ENCODE measurements at regions of chr18 and their contacts with region 1.

Region 1: DNA sequence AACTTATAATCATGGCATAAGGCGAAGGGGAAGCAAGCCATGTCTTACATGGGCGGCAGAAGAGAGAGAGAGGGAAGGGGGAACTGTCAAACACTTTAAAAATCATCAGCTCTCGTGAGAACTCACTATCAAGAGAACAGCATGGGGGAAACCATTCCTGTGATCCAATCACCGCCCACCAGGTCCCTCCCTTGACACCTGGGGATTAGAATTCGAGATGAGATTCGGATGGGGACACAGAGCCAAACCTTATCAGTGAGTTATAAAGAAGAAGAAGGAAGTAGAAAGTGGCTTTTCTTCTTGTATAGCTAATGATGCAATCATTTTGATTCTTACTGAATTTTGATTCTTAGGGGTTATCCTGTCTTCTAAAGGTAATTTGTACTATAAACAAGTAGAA is 51.4 kb downstream of the SMCHD1 start:
- DNase-seq: no peak
- ATAC-seq: no peak
- H3K4me3 ChIP-seq: no peak overlapping the region
- H3K4me3 Mint-ChIP-seq: no peak overlapping the region
- H3K27ac ChIP-seq: peak overlapping the region in 1 of 2 donors; percentile 58
- H3K27ac Mint-ChIP-seq: peak overlapping the region; percentile 82
- H3K4me1 ChIP-seq: peaks cover 0 to 3% of the 10 kb centered on the region in 2 donors
- H3K4me1 Mint-ChIP-seq: peaks cover 8% of the 10 kb centered on the region
- H3K27me3 ChIP-seq: no peaks in the 10 kb centered on the region
- H3K27me3 Mint-ChIP-seq: no peaks in the 10 kb centered on the region
- CTCF ChIP-seq: no peak

Region 2: DNA sequence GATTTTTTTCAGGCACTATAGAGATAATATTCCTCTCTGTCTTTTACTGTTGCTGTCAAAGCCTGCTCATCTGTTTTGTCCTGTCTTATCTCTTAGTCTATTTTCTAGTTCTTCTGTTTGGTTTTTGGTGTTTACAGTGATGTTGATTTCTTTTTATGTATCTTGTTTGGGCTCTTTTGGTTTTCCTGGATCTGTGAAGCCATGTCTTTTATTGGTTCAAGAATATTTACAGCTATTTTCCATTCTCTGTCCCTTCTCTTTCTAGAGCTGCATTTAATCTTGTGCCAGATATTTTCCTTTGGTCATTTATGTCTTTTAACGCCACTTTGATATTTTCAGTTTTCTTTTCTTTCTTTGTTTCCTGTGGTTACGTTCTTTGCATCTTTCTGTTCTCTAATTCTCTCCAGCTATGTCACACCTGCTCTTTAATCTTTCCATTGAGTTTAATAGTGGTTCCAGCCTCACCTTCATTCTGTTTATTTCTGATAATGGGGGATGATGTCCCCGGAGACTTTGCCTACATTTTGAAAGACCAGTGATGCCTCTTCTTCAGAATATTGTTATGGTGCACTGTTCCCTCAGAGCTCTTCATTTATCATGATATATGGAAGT is 19.4 kb before region 1 on chr18:
- CTCF ChIA-PET with region 1: no interaction called
- POLR2A ChIA-PET with region 1: no interaction called
- intact Hi-C with region 1: loop called (anchors 2 kb)
- DNase-seq: peak; percentile 36
- ATAC-seq: peak; percentile 61
- H3K4me3 ChIP-seq: peak overlapping the region in 1 of 5 experiments; percentile 27
- H3K4me3 Mint-ChIP-seq: peak overlapping the region; percentile 57
- H3K27ac ChIP-seq: peak overlapping the region; percentile 57 to 86
- H3K27ac Mint-ChIP-seq: peak overlapping the region; percentile 79
- H3K4me1 ChIP-seq: peaks cover 16 to 18% of the 10 kb centered on the region in 2 donors
- H3K4me1 Mint-ChIP-seq: peaks cover 38% of the 10 kb centered on the region
- H3K27me3 ChIP-seq: no peaks in the 10 kb centered on the region
- H3K27me3 Mint-ChIP-seq: no peaks in the 10 kb centered on the region
- CTCF ChIP-seq: no peak

Region 3: DNA sequence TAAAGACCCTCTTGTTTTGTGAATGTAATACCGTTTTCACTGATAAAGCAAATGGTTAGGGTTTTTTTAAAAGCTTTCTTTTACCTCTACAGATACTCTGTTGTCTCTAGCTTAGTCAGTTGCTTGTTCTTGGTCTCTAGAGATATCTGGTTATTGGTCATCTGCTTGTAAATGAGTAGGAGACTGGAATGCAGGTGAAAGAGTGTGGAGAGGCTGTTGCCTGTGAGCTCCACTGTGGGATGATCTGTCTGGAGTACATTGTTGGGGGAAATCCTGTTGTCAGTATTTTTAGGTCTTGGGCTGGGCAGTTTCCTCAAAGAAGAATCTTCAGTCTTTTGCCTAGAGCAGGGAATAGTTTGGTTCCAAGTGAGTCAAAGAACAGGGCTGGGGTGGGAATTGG is 16.3 kb after region 1 on chr18:
- CTCF ChIA-PET with region 1: no interaction called
- POLR2A ChIA-PET with region 1: no interaction called
- intact Hi-C with region 1: loop called (anchors 2 kb)
- DNase-seq: no peak
- ATAC-seq: no peak
- H3K4me3 ChIP-seq: no peak overlapping the region
- H3K4me3 Mint-ChIP-seq: no peak overlapping the region
- H3K27ac ChIP-seq: peak overlapping the region in 1 of 2 donors; percentile 32
- H3K27ac Mint-ChIP-seq: no peak overlapping the region
- H3K4me1 ChIP-seq: no peaks in the 10 kb centered on the region
- H3K4me1 Mint-ChIP-seq: no peaks in the 10 kb centered on the region
- H3K27me3 ChIP-seq: no peaks in the 10 kb centered on the region
- H3K27me3 Mint-ChIP-seq: no peaks in the 10 kb centered on the region
- CTCF ChIP-seq: no peak

Region 4: GRCh38 chr18:4639628-4640310 is 1932.9 kb after region 1 on chr18:
- CTCF ChIA-PET with region 1: no interaction called
- POLR2A ChIA-PET with region 1: no interaction called
- intact Hi-C with region 1: no loop called
- DNase-seq: no peak
- ATAC-seq: no peak
- H3K4me3 ChIP-seq: no peak overlapping the region
- H3K4me3 Mint-ChIP-seq: no peak overlapping the region
- H3K27ac ChIP-seq: no peak overlapping the region
- H3K27ac Mint-ChIP-seq: no peak overlapping the region
- H3K4me1 ChIP-seq: no peaks in the 10 kb centered on the region
- H3K4me1 Mint-ChIP-seq: no peaks in the 10 kb centered on the region
- H3K27me3 ChIP-seq: no peaks in the 10 kb centered on the region
- H3K27me3 Mint-ChIP-seq: no peaks in the 10 kb centered on the region
- CTCF ChIP-seq: no peak

Measured in B cell (primary cell).